Activated B cell treated with CpG ODN at 0.5 μM for 24 hours (primary cell): ENCODE measurements at regions of chr10 and their contacts with region 1.

Region 1: GRCh38 chr10:26805567-26806245 is 55.1 kb downstream of the ABI1 start:
- DNase-seq: no peak
- ATAC-seq: no peak
- H3K4me3 Mint-ChIP-seq: peak overlapping the region; percentile 2
- H3K27ac Mint-ChIP-seq: peak overlapping the region; percentile 6
- H3K4me1 Mint-ChIP-seq: peaks cover 80% of the 10 kb centered on the region
- H3K27me3 Mint-ChIP-seq: no peaks in the 10 kb centered on the region
- CTCF ChIP-seq: no peak

Region 2: GRCh38 chr10:25875556-25876165 is 930.0 kb before region 1 on chr10:
- CTCF ChIA-PET with region 1: no interaction called
- POLR2A ChIA-PET with region 1: no interaction called
- intact Hi-C with region 1: no loop called
- DNase-seq: peak; percentile 34
- ATAC-seq: peak; percentile 76
- H3K4me3 Mint-ChIP-seq: no peak overlapping the region
- H3K27ac Mint-ChIP-seq: no peak overlapping the region
- H3K4me1 Mint-ChIP-seq: no peaks in the 10 kb centered on the region
- H3K27me3 Mint-ChIP-seq: no peaks in the 10 kb centered on the region
- CTCF ChIP-seq: peak; percentile 91

Region 3: GRCh38 chr10:26837139-26837538 is 31.4 kb after region 1 on chr10:
- CTCF ChIA-PET with region 1: no interaction called
- POLR2A ChIA-PET with region 1: interaction called, 3 read pairs
- intact Hi-C with region 1: loop called (anchors 2 kb)
- DNase-seq: no peak
- ATAC-seq: peak; percentile 73
- H3K4me3 Mint-ChIP-seq: no peak overlapping the region
- H3K27ac Mint-ChIP-seq: peak overlapping the region; percentile 68
- H3K4me1 Mint-ChIP-seq: peaks cover 83% of the 10 kb centered on the region
- H3K27me3 Mint-ChIP-seq: no peaks in the 10 kb centered on the region
- CTCF ChIP-seq: no peak

Region 4: DNA sequence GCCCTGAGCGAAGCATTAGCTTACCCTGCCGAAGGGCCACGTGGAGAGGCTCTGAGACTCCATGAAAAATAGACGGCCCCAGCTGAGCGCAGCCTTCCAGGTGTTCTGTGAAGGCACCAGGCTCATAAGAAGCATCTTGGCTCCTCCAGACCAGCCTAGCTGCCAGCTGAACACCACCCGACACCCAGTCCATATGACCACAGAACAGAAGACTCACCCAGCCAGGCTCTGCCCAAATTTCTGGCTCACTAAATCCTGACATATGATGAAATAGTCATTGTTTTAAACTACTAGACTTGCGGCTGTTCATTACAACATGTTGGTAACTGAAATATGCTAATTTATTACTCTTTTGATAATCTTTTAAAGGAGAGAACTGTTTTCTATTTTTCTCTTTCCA is 154.6 kb after region 1 on chr10:
- CTCF ChIA-PET with region 1: no interaction called
- POLR2A ChIA-PET with region 1: no interaction called
- intact Hi-C with region 1: no loop called
- DNase-seq: no peak
- ATAC-seq: no peak
- H3K4me3 Mint-ChIP-seq: no peak overlapping the region
- H3K27ac Mint-ChIP-seq: no peak overlapping the region
- H3K4me1 Mint-ChIP-seq: no peaks in the 10 kb centered on the region
- H3K27me3 Mint-ChIP-seq: no peaks in the 10 kb centered on the region
- CTCF ChIP-seq: no peak

Region 5: DNA sequence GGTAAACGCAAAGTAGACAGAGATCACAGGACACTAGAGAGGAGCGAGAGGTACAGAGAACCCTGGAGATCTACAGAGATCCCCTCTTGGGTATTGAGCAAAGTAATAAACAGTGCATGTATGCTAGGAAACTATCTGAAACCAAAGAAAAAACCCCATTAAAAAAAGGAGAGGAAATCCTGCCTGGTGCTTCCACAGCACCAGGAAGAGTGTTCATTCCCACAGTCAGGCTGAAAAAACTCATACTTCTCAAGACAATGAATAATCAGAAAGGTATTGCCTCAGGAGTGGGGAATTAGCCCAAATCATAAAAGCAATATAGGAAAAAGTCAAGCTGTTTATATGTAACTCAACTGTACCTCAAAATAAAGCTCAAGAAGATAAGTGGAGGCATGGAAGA is 235.5 kb after region 1 on chr10:
- CTCF ChIA-PET with region 1: no interaction called
- POLR2A ChIA-PET with region 1: no interaction called
- intact Hi-C with region 1: no loop called
- DNase-seq: no peak
- ATAC-seq: no peak
- H3K4me3 Mint-ChIP-seq: no peak overlapping the region
- H3K27ac Mint-ChIP-seq: no peak overlapping the region
- H3K4me1 Mint-ChIP-seq: no peaks in the 10 kb centered on the region
- H3K27me3 Mint-ChIP-seq: no peaks in the 10 kb centered on the region
- CTCF ChIP-seq: no peak

Region 6: GRCh38 chr10:27052646-27053045 is 246.9 kb after region 1 on chr10:
- CTCF ChIA-PET with region 1: no interaction called
- POLR2A ChIA-PET with region 1: no interaction called
- intact Hi-C with region 1: no loop called
- DNase-seq: no peak
- ATAC-seq: no peak
- H3K4me3 Mint-ChIP-seq: no peak overlapping the region
- H3K27ac Mint-ChIP-seq: no peak overlapping the region
- H3K4me1 Mint-ChIP-seq: peaks cover 7% of the 10 kb centered on the region
- H3K27me3 Mint-ChIP-seq: no peaks in the 10 kb centered on the region
- CTCF ChIP-seq: no peak